ENCODE measurements at regions of chr7 and their contacts with region 1.

Region 1: GRCh38 chr7:21253740-21254687 is 173.9 kb upstream of the SP4 start:
- DNase-seq: peak; percentile 77
- H3K4me3 Mint-ChIP-seq: no peak overlapping the region
- H3K27ac Mint-ChIP-seq: no peak overlapping the region
- H3K4me1 Mint-ChIP-seq: no peaks in the 10 kb centered on the region
- H3K27me3 Mint-ChIP-seq: peaks cover 82% of the 10 kb centered on the region
- CTCF ChIP-seq: peak; percentile 73

Region 2: GRCh38 chr7:20778063-20778721 is 475.8 kb before region 1 on chr7:
- CTCF ChIA-PET with region 1: interaction called, 15 read pairs
- intact Hi-C with region 1: loop called (anchors 1 kb)
- DNase-seq: peak; percentile 79
- H3K4me3 Mint-ChIP-seq: peak overlapping the region; percentile 71
- H3K27ac Mint-ChIP-seq: no peak overlapping the region
- H3K4me1 Mint-ChIP-seq: peaks cover 14% of the 10 kb centered on the region
- H3K27me3 Mint-ChIP-seq: peaks cover 79% of the 10 kb centered on the region
- CTCF ChIP-seq: peak; percentile 97

Region 3: DNA sequence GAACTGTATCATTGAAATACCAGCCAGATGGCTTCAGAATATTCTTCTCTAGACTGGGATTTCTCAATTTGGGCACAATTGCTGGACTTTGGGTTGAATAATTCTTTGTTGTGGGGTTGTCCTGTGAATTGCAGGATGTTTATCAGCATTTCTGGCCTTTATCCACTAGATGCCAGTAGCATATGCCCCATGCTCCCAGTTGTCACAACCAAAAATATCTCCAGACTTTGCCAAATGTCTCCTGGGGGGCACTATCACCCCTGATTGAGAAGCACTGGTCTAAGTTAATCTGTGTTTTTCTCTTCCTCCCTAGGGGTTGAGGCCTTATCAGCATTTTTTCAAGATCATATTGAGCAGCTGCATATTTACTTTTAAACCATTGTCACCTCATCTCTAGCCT is 262.5 kb before region 1 on chr7:
- CTCF ChIA-PET with region 1: interaction called, 3 read pairs
- intact Hi-C with region 1: loop called (anchors 1 kb)
- DNase-seq: no peak
- H3K4me3 Mint-ChIP-seq: no peak overlapping the region
- H3K27ac Mint-ChIP-seq: no peak overlapping the region
- H3K4me1 Mint-ChIP-seq: no peaks in the 10 kb centered on the region
- H3K27me3 Mint-ChIP-seq: peaks cover 11% of the 10 kb centered on the region
- CTCF ChIP-seq: peak; percentile 44

Region 4: DNA sequence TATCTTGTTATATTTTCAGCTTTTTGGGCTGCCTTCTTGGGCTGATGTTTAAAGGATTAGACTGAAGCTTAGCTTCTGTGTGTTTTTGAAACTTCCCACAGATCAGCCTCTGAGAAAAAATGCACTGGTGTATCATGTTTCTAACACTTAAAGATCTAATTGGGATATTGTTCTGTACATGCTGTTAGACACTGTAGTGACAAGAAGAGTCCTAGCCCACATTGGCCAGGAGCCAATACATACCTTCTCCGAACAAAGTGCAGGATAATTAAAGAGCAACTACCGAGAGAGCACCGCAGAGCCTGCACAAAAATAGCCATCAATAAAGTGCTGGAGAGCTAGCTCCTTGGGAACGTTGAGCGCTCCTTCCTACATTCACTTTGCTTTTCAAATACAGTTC is 178.0 kb before region 1 on chr7:
- CTCF ChIA-PET with region 1: no interaction called
- intact Hi-C with region 1: loop called (anchors 5 kb)
- DNase-seq: no peak
- H3K4me3 Mint-ChIP-seq: no peak overlapping the region
- H3K27ac Mint-ChIP-seq: no peak overlapping the region
- H3K4me1 Mint-ChIP-seq: peaks cover 14% of the 10 kb centered on the region
- H3K27me3 Mint-ChIP-seq: peaks cover 78% of the 10 kb centered on the region
- CTCF ChIP-seq: no peak

Region 5: GRCh38 chr7:21281183-21281582 is 27.2 kb after region 1 on chr7:
- CTCF ChIA-PET with region 1: no interaction called
- intact Hi-C with region 1: no loop called
- DNase-seq: no peak
- H3K4me3 Mint-ChIP-seq: no peak overlapping the region
- H3K27ac Mint-ChIP-seq: no peak overlapping the region
- H3K4me1 Mint-ChIP-seq: no peaks in the 10 kb centered on the region
- H3K27me3 Mint-ChIP-seq: peaks cover 12% of the 10 kb centered on the region
- CTCF ChIP-seq: no peak

Region 6: GRCh38 chr7:21690705-21691104 is 436.7 kb after region 1 on chr7:
- CTCF ChIA-PET with region 1: no interaction called
- intact Hi-C with region 1: loop called (anchors 10 kb)
- DNase-seq: no peak
- H3K4me3 Mint-ChIP-seq: no peak overlapping the region
- H3K27ac Mint-ChIP-seq: no peak overlapping the region
- H3K4me1 Mint-ChIP-seq: no peaks in the 10 kb centered on the region
- H3K27me3 Mint-ChIP-seq: peaks cover 14% of the 10 kb centered on the region
- CTCF ChIP-seq: no peak

Region 7: DNA sequence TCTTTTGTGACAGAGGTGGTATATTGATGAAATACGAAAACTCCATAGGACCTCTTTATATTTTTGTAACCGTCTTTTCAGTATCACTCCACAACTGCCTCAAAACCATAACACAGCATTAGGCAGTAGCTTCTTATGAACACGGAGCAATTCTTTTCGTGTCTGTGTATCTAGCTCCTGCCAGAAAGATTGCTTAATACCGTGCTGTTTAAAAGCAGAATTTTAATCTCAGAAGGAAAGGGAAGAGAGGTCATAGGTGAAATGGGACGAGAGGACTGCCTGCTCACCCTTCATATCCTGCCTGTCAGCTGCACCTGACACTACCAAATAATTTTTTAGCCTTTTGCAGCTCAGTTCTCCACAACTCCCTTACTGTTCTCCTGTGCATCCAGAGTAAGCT is 489.5 kb after region 1 on chr7:
- CTCF ChIA-PET with region 1: no interaction called
- intact Hi-C with region 1: no loop called
- DNase-seq: no peak
- H3K4me3 Mint-ChIP-seq: no peak overlapping the region
- H3K27ac Mint-ChIP-seq: no peak overlapping the region
- H3K4me1 Mint-ChIP-seq: no peaks in the 10 kb centered on the region
- H3K27me3 Mint-ChIP-seq: peaks cover 27% of the 10 kb centered on the region
- CTCF ChIP-seq: no peak

Region 8: DNA sequence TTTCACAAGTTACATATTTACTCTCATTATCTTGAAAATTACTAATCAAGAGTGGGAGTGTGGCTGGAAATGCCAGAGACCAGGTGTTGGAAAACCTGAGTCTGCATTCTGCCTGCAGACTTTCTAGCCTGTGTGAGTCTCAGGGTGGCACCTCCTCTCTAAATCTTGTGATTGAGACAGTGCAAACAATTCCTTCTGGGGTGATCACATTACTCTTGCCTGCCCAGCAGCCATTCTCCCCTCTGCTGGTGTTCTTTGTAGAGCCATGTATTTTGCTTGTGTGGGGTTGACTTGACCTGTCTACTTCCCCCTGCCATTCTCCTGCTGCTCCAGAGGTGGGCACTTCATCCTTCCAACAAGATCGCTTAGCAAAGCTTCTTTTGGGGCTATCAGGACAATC is 1001.8 kb after region 1 on chr7:
- CTCF ChIA-PET with region 1: no interaction called
- intact Hi-C with region 1: no loop called
- DNase-seq: peak; percentile 9
- H3K4me3 Mint-ChIP-seq: no peak overlapping the region
- H3K27ac Mint-ChIP-seq: peak overlapping the region; percentile 9
- H3K4me1 Mint-ChIP-seq: peaks cover 21% of the 10 kb centered on the region
- H3K27me3 Mint-ChIP-seq: no peaks in the 10 kb centered on the region
- CTCF ChIP-seq: no peak

Measured in Calu3 (cell line).